ENCODE measurements at regions of chr2 and their contacts with region 1.

Region 1: DNA sequence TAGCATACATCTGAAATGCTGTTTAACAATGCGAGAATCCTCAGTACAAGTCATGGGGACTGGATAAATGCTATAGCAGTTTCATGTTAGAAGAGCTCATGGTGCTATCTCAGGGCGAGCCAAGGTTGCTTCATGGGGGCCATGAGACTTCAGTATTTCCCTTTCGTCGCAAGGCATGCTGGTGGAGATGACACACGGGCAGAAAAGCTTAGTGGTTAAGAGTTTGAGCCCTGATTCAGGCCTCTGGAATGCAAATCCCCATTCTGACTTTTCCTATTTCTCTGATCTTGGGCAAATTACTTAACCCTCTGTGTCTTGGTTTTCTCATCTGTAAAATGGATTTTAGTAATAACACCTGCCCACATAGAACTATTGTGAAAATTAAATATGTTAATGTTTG is 57.4 kb upstream of the EPHA4 start:
- DNase-seq: no peak
- ATAC-seq: no peak

Region 2: DNA sequence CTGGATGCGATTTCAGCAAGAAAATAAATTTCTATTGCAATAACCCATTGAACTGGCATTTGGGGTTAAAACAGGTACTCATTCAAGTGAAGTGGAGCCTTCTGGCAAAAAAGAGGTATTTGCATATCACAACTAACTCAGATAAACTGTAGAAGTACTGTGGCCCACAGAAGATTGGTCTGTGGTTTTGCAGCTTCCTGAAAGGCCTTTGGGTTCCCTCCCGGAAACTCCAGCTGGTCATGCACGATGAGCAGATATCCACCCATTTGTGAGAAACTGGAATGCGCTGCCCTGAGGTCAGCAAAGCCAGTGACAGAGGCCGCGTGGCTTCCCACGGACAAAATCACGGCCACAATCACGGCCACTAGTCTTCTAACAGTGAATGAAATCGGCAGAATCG is 163.7 kb before region 1 on chr2:
- intact Hi-C with region 1: no loop called
- DNase-seq: no peak
- ATAC-seq: no peak

Region 3: GRCh38 chr2:221802089-221802488 is 172.6 kb after region 1 on chr2:
- intact Hi-C with region 1: loop called (anchors 5 kb)
- DNase-seq: no peak
- ATAC-seq: no peak

Measured in Right ventricle myocardium inferior (tissue), 1 donor.